ENCODE measurements at regions of chr4 and their contacts with region 1.

Region 1: DNA sequence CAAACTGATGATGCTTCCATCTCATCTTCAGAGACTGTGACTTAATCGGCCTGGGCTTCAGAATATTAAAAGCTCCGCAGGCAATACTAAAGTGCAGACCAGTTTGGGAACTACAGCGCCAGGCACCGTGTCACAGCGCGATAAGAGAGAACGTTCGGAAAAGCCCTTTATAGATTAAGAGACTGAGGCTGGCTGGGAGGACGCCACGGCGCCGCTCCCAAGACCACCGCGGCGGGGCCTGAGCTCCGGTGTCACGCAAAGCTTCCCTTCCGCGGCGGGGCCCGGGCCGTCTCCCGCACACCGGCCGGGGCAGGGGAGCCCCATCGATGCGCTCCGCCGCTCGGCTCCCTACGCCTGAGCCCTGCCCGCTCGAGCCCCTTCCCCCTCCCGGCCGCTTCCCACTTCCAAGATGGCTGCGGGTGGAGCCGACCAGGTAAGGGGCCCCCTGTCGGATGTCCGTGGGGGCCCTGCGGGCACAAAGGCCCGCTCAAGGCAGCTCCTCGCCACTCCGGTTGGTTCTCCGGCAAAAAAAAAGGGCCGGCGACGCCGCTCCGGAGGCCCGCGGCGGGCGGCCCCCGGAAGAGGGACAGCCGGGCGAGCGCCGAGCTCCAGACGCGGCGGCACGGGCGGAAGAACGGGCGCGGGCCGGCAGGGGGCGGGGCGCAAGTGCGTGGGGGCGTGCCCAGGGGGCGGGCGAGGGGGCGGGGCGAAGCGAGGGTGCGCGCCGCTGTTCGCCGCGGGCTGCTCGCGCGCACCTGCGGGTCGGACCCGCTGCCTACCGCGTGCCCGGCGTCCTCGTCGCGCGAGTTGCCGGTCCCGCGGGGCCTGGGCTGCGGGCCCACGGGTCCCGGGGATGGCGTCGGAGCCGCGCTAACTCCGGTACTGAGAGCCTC is at the start of gene TBC1D14:
- H3K4me3 Mint-ChIP-seq: peak within 1 kb of the TSS; percentile 96
- H3K27ac Mint-ChIP-seq: peak within 1 kb of the TSS; percentile 98
- H3K4me1 Mint-ChIP-seq: peaks cover 76% of the 10 kb centered on the region
- H3K27me3 Mint-ChIP-seq: peaks cover 13% of the 10 kb centered on the region

Region 2: DNA sequence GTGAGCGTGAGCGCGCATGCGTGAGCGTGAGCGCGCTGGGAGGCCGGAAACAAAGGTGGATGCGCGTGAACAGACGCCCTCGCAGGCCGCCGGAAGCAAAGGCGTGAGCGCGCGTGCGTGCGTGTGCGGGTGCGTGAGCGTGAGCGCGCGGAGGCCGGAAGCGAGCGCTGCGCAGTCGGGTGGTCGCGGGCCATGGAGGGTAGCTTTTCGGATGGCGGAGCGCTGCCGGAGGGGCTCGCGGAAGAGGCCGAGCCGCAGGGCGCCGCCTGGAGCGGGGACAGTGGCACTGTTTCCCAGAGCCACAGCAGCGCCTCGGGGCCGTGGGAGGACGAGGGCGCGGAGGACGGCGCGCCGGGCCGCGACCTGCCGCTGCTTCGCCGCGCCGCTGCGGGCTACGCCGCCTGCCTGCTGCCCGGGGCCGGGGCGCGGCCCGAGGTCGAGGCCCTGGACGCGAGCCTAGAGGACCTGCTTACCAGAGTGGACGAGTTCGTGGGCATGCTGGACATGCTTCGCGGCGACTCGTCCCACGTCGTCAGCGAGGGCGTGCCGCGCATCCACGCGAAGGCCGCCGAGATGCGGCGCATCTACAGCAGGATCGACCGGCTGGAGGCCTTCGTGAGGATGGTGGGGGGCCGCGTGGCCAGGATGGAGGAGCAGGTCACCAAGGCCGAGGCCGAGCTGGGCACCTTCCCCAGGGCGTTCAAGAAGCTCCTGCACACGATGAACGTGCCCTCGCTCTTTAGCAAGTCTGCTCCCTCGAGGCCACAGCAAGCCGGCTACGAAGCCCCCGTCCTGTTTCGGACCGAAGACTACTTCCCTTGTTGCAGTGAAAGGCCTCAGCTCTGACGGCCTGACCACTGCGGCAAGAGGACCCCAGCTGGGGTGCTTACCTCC is 193.1 kb before region 1 on chr4 and contains the start of gene BLOC1S4:
- intact Hi-C with region 1: no loop called
- H3K4me3 Mint-ChIP-seq: peak within 1 kb of the TSS; percentile 98
- H3K27ac Mint-ChIP-seq: peak within 1 kb of the TSS; percentile 97
- H3K4me1 Mint-ChIP-seq: peaks cover 34% of the 10 kb centered on the region
- H3K27me3 Mint-ChIP-seq: peaks cover 3% of the 10 kb centered on the region

Region 3: DNA sequence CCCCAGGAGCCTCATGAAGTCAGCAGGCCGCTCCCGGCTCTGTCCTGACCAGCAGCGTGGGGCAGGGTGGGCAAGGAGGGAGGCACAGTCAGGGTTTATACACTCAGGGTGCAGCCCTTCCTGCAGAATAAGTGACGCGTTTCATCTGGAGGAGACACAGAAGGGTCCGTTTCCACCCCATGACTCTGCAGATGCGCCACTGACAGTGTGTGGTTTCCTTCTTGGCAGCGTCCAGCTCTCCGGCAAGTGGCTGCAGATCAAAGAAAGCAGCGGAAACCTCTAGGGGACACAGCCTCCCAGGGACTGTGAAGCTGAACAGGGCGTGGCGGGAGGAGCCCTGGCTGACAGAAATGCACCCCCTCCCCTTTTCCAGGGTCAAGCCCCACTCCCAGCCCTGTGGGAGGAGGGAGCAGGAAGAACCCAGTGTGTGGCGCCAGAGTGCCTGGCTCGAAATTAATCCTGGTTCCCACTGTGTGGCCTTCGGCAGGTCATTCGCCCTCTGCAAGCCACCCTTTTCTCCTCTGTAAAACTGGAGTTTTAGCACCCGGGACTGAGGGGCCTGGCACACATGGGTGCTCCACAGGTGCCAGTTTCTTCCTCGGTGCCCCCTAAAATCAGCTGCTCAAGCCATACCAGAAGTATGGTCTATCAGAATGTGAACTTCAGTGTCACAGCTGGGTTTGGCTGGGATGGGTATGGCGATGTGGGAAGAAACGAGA is 17.0 kb before region 1 on chr4:
- intact Hi-C with region 1: loop called (anchors 2 kb)
- H3K4me3 Mint-ChIP-seq: peak overlapping the region; percentile 37
- H3K27ac Mint-ChIP-seq: peak overlapping the region; percentile 92
- H3K4me1 Mint-ChIP-seq: peaks cover 67% of the 10 kb centered on the region
- H3K27me3 Mint-ChIP-seq: peaks cover 1% of the 10 kb centered on the region

Region 4: GRCh38 chr4:6955261-6955911 is 46.1 kb after region 1 on chr4:
- intact Hi-C with region 1: loop called (anchors 5 kb)
- H3K4me3 Mint-ChIP-seq: no peak overlapping the region
- H3K27ac Mint-ChIP-seq: no peak overlapping the region
- H3K4me1 Mint-ChIP-seq: peaks cover 79% of the 10 kb centered on the region
- H3K27me3 Mint-ChIP-seq: no peaks in the 10 kb centered on the region

Region 5: DNA sequence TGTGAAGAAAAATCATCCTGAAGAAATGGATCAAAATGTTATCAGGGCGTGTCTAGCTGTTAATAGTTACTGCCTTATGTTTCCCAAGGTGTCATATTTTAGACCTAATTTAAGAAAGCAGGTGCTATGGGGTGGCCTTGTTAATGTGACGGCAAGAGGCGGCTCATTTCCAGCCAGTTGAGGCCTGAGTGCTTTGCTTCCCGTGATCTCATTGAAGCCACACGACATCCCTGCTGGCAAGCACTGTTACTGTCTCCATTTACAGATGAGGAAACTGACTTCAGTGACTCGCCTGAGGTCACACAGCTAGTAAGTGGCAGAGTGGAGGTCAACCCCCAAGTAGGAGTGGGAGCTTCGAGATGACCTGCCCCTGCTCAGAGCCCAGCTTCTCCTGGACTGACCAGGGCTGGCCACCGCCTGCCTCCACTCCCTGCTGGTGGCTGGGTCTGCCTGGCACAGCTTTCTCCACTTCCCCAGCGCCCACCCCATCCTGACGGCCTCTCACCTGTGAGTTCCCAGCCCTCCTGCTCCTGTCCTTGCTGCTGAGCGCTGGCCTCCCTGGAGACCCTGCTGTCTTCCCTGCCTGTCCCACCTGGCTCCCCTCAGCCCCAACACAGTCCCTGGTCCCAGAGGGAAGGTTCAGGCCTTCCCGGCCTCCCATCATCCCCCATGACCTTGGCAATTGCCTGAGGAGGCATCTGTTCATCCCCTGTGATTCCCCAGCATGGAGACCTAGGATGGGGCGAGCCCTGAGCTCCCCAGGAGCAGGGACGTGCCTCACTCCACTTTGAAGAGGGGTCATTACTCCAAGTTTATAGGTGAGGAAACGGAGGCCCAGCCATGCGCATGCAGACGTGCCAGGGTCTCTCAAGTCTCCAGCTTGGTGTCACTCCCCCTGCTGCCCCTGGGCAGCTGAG is 235.3 kb after region 1 on chr4:
- intact Hi-C with region 1: no loop called
- H3K4me3 Mint-ChIP-seq: no peak overlapping the region
- H3K27ac Mint-ChIP-seq: no peak overlapping the region
- H3K4me1 Mint-ChIP-seq: no peaks in the 10 kb centered on the region
- H3K27me3 Mint-ChIP-seq: peaks cover 14% of the 10 kb centered on the region